CD8-positive, alpha-beta memory T cell (primary cell): ENCODE measurements at regions of chr9 and their contacts with region 1.

Region 1: DNA sequence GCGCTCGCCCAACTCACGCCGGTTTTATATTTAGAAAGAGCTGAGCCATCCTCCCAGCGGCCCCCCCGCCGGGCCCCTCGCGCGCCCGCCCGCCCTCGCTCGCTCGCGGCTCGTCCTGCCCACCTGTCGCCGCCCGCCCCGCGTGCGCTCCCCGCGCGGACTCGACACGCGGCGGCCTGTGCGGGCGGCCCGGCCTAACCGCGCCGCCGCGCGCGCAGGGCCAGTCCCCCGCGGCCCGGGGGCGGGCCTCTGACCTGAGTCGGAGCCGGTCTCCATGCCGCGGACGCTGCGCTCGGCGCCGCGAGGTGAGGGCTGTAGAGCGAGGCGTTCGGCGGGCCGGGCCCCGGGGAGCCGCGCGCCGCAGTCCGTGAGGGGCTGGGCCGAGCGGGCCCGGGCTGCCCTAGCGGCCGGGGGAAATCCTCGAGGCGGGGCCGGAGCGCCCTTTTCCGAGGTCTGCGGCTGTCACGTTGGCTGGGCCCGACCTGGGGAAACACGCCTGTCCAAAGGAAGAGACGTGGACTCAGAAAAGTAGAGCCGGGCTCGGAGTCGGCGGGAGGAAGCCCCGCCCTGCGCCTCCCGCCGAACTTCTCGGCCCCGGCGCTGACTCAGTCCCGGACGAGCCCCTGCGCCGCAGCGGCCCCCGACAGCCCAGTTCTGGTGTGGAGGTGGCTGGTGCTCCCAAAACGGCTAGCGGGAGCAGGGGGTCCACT is at the start of gene ECPAS:
- DNase-seq: peak; percentile 50 to 76 (median 70)
- H3K4me3 ChIP-seq: peak within 1 kb of the TSS; percentile 49
- H3K4me3 Mint-ChIP-seq: peak within 1 kb of the TSS; percentile 81 to 95 (median 89)
- H3K27ac ChIP-seq: peak within 1 kb of the TSS; percentile 86
- H3K27ac Mint-ChIP-seq: peak within 1 kb of the TSS; percentile 76 to 96 (median 94)
- H3K4me1 ChIP-seq: peaks cover 13% of the 10 kb centered on the region
- H3K4me1 Mint-ChIP-seq: peaks cover 27 to 41% (median 36%) of the 10 kb centered on the region in 3 donors
- H3K27me3 ChIP-seq: no peaks in the 10 kb centered on the region
- H3K27me3 Mint-ChIP-seq: peaks cover 2 to 4% of the 10 kb centered on the region in 2 donors
- total RNA-seq, gene ECPAS: 86.4 to 92.8 TPM

Region 2: DNA sequence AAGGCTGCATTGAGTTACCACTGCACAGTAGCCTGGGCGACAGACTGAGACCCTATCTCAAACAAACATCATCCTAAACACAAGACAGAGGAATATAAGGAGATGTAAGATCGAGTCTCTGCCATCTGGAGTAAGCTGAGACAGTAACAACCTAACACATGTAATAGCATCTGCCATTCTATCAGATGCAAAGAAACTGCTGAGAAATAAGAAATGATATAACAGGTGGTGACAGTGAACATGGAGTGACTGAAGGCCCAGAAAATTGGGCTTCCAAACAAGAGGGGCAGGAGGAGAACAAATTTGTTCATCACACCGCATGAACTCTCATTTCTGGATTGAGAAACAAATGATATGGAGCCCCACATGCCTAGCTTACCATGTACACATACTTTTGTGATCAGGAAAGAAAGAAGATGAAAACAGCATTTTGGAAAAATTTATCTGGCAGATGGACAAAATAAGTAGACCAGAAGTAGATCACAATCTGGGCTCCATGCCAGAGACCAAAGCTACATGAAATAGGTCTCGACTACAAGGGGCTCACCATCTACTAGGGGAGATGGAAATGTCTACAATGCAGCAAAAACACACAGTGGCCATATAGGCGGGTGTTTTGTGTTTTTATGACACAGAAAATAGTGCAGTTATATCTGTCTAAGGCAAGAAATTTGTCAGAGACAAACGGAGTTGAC is 45.3 kb before region 1 on chr9:
- CTCF ChIA-PET with region 1: no interaction called
- POLR2A ChIA-PET with region 1: no interaction called
- DNase-seq: no peak
- H3K4me3 ChIP-seq: no peak overlapping the region
- H3K4me3 Mint-ChIP-seq: no peak overlapping the region
- H3K27ac ChIP-seq: no peak overlapping the region
- H3K27ac Mint-ChIP-seq: peak overlapping the region in 1 of 8 donors; percentile 88
- H3K4me1 ChIP-seq: no peaks in the 10 kb centered on the region
- H3K4me1 Mint-ChIP-seq: no peaks in the 10 kb centered on the region
- H3K27me3 ChIP-seq: no peaks in the 10 kb centered on the region
- H3K27me3 Mint-ChIP-seq: no peaks in the 10 kb centered on the region

Region 3: GRCh38 chr9:111501648-111502047 is 17.6 kb after region 1 on chr9:
- CTCF ChIA-PET with region 1: no interaction called
- POLR2A ChIA-PET with region 1: no interaction called
- DNase-seq: no peak
- H3K4me3 ChIP-seq: no peak overlapping the region
- H3K4me3 Mint-ChIP-seq: no peak overlapping the region
- H3K27ac ChIP-seq: no peak overlapping the region
- H3K27ac Mint-ChIP-seq: peak overlapping the region in 1 of 8 donors; percentile 36
- H3K4me1 ChIP-seq: no peaks in the 10 kb centered on the region
- H3K4me1 Mint-ChIP-seq: no peaks in the 10 kb centered on the region
- H3K27me3 ChIP-seq: no peaks in the 10 kb centered on the region
- H3K27me3 Mint-ChIP-seq: peaks cover 3 to 23% of the 10 kb centered on the region in 2 donors

Region 4: GRCh38 chr9:111525056-111525977 is 41.3 kb after region 1 on chr9 and contains the start of gene ZNF483:
- CTCF ChIA-PET with region 1: interaction called, 4 read pairs
- POLR2A ChIA-PET with region 1: interaction called, 18 read pairs
- DNase-seq: peak; percentile 47 to 87 (median 72)
- H3K4me3 ChIP-seq: peak within 1 kb of the TSS; percentile 93
- H3K4me3 Mint-ChIP-seq: peak within 1 kb of the TSS; percentile 93 to 98 (median 97)
- H3K27ac ChIP-seq: peak within 1 kb of the TSS; percentile 83
- H3K27ac Mint-ChIP-seq: peak within 1 kb of the TSS; percentile 84 to 99 (median 98)
- H3K4me1 ChIP-seq: peaks cover 9% of the 10 kb centered on the region
- H3K4me1 Mint-ChIP-seq: peaks cover 18 to 31% (median 30%) of the 10 kb centered on the region in 3 donors
- H3K27me3 ChIP-seq: no peaks in the 10 kb centered on the region
- H3K27me3 Mint-ChIP-seq: peaks cover 2 to 5% of the 10 kb centered on the region in 2 donors
- total RNA-seq, gene ZNF483: 2.7 to 2.8 TPM

Region 5: GRCh38 chr9:111897601-111898137 is 413.7 kb after region 1 on chr9:
- CTCF ChIA-PET with region 1: no interaction called
- POLR2A ChIA-PET with region 1: no interaction called
- DNase-seq: peak in 1 of 5 donors; percentile 17
- H3K4me3 ChIP-seq: peak overlapping the region; percentile 72
- H3K4me3 Mint-ChIP-seq: no peak overlapping the region
- H3K27ac ChIP-seq: peak overlapping the region; percentile 71
- H3K27ac Mint-ChIP-seq: no peak overlapping the region
- H3K4me1 ChIP-seq: peaks cover 46% of the 10 kb centered on the region
- H3K4me1 Mint-ChIP-seq: peaks cover 9 to 22% (median 20%) of the 10 kb centered on the region in 3 donors
- H3K27me3 ChIP-seq: no peaks in the 10 kb centered on the region
- H3K27me3 Mint-ChIP-seq: no peaks in the 10 kb centered on the region